SK-N-SH (cell line): ENCODE measurements at regions of chr15 and their contacts with region 1.

Region 1: GRCh38 chr15:48507416-48508065 is 138.0 kb downstream of the FBN1 start:
- DNase-seq: peak; percentile 42
- H3K4me3 ChIP-seq: no peak overlapping the region
- H3K27ac ChIP-seq: no peak overlapping the region
- H3K4me1 ChIP-seq: no peaks in the 10 kb centered on the region
- H3K27me3 ChIP-seq: no peaks in the 10 kb centered on the region
- CTCF ChIP-seq: peak; percentile 75
- EP300 ChIP-seq: no peak
- RAD21 ChIP-seq: peak; percentile 59

Region 2: GRCh38 chr15:48493084-48493762 is 14.3 kb before region 1 on chr15:
- CTCF ChIA-PET with region 1: interaction called, 13 read pairs
- POLR2A ChIA-PET with region 1: no interaction called
- DNase-seq: no peak
- H3K4me3 ChIP-seq: no peak overlapping the region
- H3K27ac ChIP-seq: peak overlapping the region; percentile 86 to 95; a peak in 3 of 4 replicates
- H3K4me1 ChIP-seq: peaks cover 0 to 29% of the 10 kb centered on the region in 2 experiments
- H3K27me3 ChIP-seq: no peaks in the 10 kb centered on the region
- CTCF ChIP-seq: no peak
- EP300 ChIP-seq: peak; percentile 53 to 96
- RAD21 ChIP-seq: no peak

Region 3: DNA sequence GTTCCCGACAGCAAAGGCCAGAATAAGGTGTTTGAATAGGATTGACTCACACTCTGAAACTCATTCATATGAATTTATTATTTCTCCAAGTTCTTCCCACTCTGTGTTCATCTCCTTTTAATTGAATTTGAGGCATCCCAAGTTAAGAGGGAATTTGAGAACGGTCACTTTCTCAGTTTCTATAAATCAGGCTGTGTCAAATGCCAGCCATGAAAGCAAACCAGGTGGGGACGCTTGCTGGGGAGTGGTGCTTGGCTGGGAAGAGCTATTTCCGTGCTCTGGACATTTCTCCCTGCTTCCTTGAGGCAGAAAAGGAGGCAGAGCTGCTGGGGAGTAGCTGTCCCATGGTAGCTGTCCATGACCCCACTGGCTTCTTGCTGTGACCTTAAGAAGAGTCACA is 21.4 kb after region 1 on chr15:
- CTCF ChIA-PET with region 1: interaction called, 12 read pairs
- POLR2A ChIA-PET with region 1: no interaction called
- DNase-seq: no peak
- H3K4me3 ChIP-seq: no peak overlapping the region
- H3K27ac ChIP-seq: no peak overlapping the region
- H3K4me1 ChIP-seq: peaks cover 6 to 26% of the 10 kb centered on the region in 2 experiments; a peak in 3 of 4 replicates
- H3K27me3 ChIP-seq: no peaks in the 10 kb centered on the region
- CTCF ChIP-seq: no peak
- EP300 ChIP-seq: no peak
- RAD21 ChIP-seq: no peak